Posterior cingulate gyrus (tissue), 11 donors: ENCODE measurements at regions of chr2 and their contacts with region 1.

Region 1: GRCh38 chr2:187447336-187447735 is 716 bp downstream of the CALCRL start:
- DNase-seq: no peak

Region 2: GRCh38 chr2:186980787-186981550 is 466.4 kb before region 1 on chr2:
- intact Hi-C with region 1: no loop called
- DNase-seq: no peak

Region 3: DNA sequence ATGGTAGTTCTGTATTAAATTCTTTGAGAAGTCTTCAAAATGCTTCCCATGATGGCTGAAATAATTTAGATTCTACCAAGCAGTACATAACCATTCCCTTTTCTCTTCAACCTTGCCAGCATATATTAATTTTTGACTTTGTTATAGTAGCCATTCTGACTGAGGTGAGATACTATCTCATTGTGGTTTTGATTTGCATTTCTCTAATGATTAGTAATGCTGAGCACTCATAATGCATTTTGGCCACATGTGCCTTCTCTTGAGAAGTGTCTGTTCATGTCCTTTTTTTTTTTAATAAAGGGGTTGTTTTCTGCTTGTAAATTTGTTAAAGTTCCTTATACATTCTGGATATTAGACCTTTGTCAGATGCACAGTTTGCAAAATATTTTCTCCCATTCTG is 173.2 kb before region 1 on chr2:
- intact Hi-C with region 1: no loop called
- DNase-seq: no peak

Region 4: GRCh38 chr2:187302619-187303018 is 144.7 kb before region 1 on chr2:
- intact Hi-C with region 1: loop called (anchors 5 kb)
- DNase-seq: no peak

Region 5: DNA sequence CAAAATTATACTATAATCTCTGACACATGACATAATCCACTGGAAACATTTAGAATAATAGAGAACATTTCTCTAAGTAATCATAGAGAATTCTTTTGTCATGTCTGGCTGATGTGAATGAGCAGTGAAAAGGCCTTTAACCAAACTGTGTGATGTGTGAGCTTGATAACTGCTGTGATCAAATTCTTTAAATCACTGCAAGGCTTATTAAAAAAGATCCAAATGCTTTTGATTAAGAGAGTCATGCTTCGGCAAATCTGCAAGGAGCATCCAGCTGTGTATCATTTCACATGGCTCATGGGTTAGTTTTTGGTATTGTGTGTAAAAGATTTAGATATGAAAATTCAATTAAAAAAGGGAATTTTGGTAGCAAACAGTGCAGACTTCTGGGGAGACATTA is 165.5 kb after region 1 on chr2:
- intact Hi-C with region 1: no loop called
- DNase-seq: no peak